Activated T-helper 1 cell treated with anti-CD3 and anti-CD28 coated beads, Interleukin-12 subunit alpha, Interleukin-12 subunit beta, Interleukin-2, Interleukin-4 antibody, amounts not matched to agents 30 ng/mL and 10 ng/mL and 1 ng/mL, durations not matched to agents 14 hours and 24 hours and 36 hours (primary cell): ENCODE measurements at regions of chr1 and their contacts with region 1.

Region 1: GRCh38 chr1:15603050-15603965 is 13.9 kb upstream of the DDI2 start:
- DNase-seq: peak; percentile 91
- H3K4me3 Mint-ChIP-seq: peak overlapping the region; percentile 80
- H3K27ac Mint-ChIP-seq: peak overlapping the region; percentile 55
- H3K4me1 Mint-ChIP-seq: peaks cover 6% of the 10 kb centered on the region
- H3K27me3 Mint-ChIP-seq: no peaks in the 10 kb centered on the region

Region 2: DNA sequence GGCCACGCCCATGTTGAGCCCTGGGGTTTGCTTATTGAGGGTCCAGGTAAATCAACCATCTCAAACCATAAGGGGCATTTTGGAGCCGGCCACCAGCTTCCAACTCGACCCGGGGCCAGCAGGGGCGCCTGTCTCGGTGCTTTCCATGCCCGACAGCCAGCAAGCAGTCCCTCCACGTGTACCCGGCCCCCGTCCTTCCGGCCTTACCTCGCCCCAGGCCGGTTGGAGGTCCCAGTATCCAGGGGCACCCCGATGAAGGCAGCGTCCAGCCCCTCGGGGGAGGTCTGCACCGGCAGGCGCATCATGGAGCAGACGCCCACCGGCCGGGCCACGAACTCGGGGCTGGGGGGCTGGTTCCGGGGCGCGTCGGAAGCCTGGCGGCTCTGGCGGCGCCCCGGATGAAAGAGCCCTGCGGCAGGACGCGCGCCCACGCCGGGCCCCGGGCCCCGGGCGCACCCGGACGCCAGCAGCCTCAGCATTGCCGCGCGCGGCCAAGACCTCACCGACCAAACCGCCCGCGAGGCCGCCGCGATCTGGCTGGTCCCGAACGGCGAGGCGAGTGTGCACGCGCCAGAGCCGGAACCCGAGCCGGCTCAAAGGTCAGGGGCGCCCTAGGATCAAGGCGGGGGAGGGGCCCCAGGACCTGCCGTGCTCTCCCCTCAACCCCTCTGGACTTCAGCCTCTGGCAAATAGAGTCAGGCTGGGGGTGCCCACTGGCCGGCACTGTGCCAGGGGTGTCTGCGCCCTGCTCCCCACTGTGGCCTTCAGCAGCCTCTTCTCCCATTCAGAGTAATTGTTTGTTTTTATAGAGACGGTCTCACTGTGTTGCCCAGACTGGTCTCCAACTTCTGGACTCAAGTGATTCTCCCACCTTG is 18.6 kb before region 1 on chr1 and contains the start of gene AGMAT:
- intact Hi-C with region 1: loop called (anchors 2 kb)
- DNase-seq: peak; percentile 43
- H3K4me3 Mint-ChIP-seq: peak within 1 kb of the TSS; percentile 89
- H3K27ac Mint-ChIP-seq: peak within 1 kb of the TSS; percentile 89
- H3K4me1 Mint-ChIP-seq: peaks cover 26% of the 10 kb centered on the region
- H3K27me3 Mint-ChIP-seq: no peaks in the 10 kb centered on the region
- total RNA-seq, gene AGMAT: 34.4 and 34.5 TPM in 2 replicates

Region 3: DNA sequence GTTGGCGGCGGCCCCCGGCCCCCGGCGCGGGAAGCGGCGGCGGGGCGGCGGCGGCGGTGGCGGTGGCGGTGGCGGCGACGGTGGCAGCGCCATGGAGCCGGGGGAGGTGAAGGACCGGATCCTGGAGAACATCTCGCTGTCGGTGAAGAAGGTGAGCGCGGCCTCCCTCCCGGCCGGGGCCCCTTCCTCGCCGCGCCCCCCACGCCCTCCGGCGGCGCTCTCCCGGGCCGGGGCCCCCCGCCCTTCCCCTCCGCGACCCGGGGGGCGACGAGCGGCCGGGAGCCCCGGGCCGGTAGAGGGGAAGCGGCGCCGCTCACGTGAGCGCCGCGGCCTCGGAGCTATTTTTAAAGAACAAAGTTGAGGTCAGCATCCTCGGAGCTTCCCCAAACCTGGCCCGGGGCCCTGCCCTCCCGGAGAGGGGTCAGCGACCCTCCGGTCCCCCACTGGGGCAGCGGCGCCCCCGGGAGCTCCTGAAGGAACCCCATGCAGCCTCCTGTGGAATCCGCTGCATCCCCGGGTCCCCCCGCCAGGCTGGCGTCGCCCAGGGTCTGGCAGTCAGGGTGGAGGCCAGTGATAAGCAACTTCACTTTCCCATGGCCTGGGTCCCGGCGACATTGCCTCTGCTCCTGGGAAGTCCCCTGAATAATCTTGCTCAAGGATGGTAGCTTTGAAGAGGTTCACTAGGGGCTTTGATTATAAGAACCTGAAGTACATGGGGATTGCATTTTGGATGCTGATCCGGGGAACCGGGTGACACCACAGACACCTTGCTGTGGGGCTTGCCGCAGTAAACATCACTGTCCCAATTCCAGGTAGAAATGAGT is 81.4 kb after region 1 on chr1:
- intact Hi-C with region 1: loop called (anchors 5 kb)
- DNase-seq: peak; percentile 18
- H3K4me3 Mint-ChIP-seq: peak overlapping the region; percentile 88
- H3K27ac Mint-ChIP-seq: peak overlapping the region; percentile 86
- H3K4me1 Mint-ChIP-seq: peaks cover 31% of the 10 kb centered on the region
- H3K27me3 Mint-ChIP-seq: peaks cover 2% of the 10 kb centered on the region

Region 4: GRCh38 chr1:16904560-16905111 is 1301.3 kb after region 1 on chr1:
- intact Hi-C with region 1: loop called (anchors 10 kb)
- DNase-seq: peak; percentile 99
- H3K4me3 Mint-ChIP-seq: no peak overlapping the region
- H3K27ac Mint-ChIP-seq: no peak overlapping the region
- H3K4me1 Mint-ChIP-seq: peaks cover 19% of the 10 kb centered on the region
- H3K27me3 Mint-ChIP-seq: no peaks in the 10 kb centered on the region